ENCODE measurements at regions of chr5 and their contacts with region 1.

Region 1: DNA sequence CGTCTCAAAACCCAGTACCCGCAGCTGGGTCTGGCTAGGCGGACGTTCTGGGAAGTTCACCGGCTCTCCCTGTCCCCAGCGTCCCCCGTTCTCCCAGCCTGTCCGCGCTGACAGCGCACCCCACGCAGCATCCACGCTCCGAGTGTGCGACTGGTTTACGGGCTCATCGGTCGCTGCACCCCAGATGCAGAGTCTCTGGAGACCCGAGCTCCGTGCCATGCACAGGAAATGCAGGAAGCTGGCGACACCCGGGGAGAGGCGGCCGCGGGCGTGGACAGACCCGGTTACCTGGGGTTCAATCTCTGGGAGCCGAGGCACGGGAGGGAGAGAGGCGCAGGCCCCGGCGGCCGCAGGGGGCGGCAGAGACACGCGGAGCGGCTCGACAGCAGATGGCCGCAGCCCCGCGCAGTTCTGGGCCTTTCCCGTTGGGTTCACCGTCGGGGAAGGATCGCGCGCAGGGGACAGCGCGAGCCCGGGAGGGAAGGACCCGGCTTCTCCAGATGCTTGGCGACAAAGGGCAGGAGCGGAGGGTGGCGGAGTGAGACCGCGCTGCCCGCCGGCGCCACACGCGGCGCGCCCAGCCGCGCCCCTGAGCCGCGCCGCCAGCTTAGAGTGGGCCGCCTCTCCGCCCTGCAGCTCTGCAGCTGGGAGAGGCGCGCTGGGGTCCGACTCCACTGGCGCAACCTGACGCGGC is 558 bp downstream of the SHROOM1 start:
- DNase-seq: peak; percentile 54 to 77 (median 66)
- H3K4me3 ChIP-seq: peak overlapping the region; percentile 58
- H3K4me3 Mint-ChIP-seq: peak overlapping the region; percentile 87 to 96 (median 88)
- H3K27ac ChIP-seq: peak overlapping the region; percentile 51
- H3K27ac Mint-ChIP-seq: peak overlapping the region in 3 of 8 donors; percentile 8 to 68 (median 66)
- H3K4me1 ChIP-seq: peaks cover 5% of the 10 kb centered on the region
- H3K4me1 Mint-ChIP-seq: peaks cover 4 to 24% (median 6%) of the 10 kb centered on the region in 3 donors
- H3K27me3 ChIP-seq: peaks cover 21% of the 10 kb centered on the region
- H3K27me3 Mint-ChIP-seq: peaks cover 34 to 41% of the 10 kb centered on the region in 2 donors

Region 2: GRCh38 chr5:132526290-132526973 is 303.5 kb before region 1 on chr5:
- CTCF ChIA-PET with region 1: interaction called, 12 read pairs
- POLR2A ChIA-PET with region 1: no interaction called
- DNase-seq: peak in 4 of 5 donors; percentile 5 to 50 (median 44)
- H3K4me3 ChIP-seq: no peak overlapping the region
- H3K4me3 Mint-ChIP-seq: peak overlapping the region in 2 of 7 donors; percentile 25 to 71
- H3K27ac ChIP-seq: no peak overlapping the region
- H3K27ac Mint-ChIP-seq: no peak overlapping the region
- H3K4me1 ChIP-seq: peaks cover 6% of the 10 kb centered on the region
- H3K4me1 Mint-ChIP-seq: peaks cover 4 to 19% (median 10%) of the 10 kb centered on the region in 3 donors
- H3K27me3 ChIP-seq: no peaks in the 10 kb centered on the region
- H3K27me3 Mint-ChIP-seq: peaks cover 2 to 5% of the 10 kb centered on the region in 2 donors

Region 3: GRCh38 chr5:132736853-132737833 is 92.7 kb before region 1 on chr5 and contains the start of gene KIF3A:
- CTCF ChIA-PET with region 1: no interaction called
- POLR2A ChIA-PET with region 1: no interaction called
- DNase-seq: peak; percentile 96 to 99 (median 98)
- H3K4me3 ChIP-seq: peak within 1 kb of the TSS; percentile 81
- H3K4me3 Mint-ChIP-seq: peak within 1 kb of the TSS; percentile 87 to 97 (median 93)
- H3K27ac ChIP-seq: peak within 1 kb of the TSS; percentile 77
- H3K27ac Mint-ChIP-seq: peak within 1 kb of the TSS; percentile 84 to 97 (median 93)
- H3K4me1 ChIP-seq: peaks cover 21% of the 10 kb centered on the region
- H3K4me1 Mint-ChIP-seq: peaks cover 37 to 42% (median 41%) of the 10 kb centered on the region in 3 donors
- H3K27me3 ChIP-seq: no peaks in the 10 kb centered on the region
- H3K27me3 Mint-ChIP-seq: peaks cover 0 to 1% of the 10 kb centered on the region in 2 donors
- total RNA-seq, gene KIF3A: 21.1 to 23.3 TPM

Region 4: DNA sequence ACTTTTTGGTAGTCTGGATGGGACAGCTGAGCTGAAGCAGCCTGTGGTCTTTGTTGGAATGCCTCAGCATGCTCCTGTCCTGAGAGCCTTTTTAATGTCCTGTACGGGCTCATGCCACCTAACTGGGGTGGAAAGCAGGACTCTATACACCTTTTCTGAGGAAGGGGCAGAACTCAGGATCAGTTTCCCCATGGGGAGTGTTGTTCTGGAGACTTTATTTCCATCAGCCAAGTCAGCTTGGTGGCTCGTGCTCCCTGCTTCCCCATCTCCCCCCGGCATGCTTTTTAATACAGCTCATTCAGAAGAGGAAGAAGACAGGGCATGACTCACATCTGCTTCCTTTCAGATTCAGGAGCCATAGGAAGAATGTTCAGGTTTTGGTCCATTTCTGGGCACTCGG is 47.8 kb before region 1 on chr5:
- CTCF ChIA-PET with region 1: no interaction called
- POLR2A ChIA-PET with region 1: no interaction called
- DNase-seq: no peak
- H3K4me3 ChIP-seq: no peak overlapping the region
- H3K4me3 Mint-ChIP-seq: peak overlapping the region in 1 of 7 donors; percentile 53
- H3K27ac ChIP-seq: no peak overlapping the region
- H3K27ac Mint-ChIP-seq: no peak overlapping the region
- H3K4me1 ChIP-seq: peaks cover 10% of the 10 kb centered on the region
- H3K4me1 Mint-ChIP-seq: peaks cover 17 to 29% (median 23%) of the 10 kb centered on the region in 3 donors
- H3K27me3 ChIP-seq: no peaks in the 10 kb centered on the region
- H3K27me3 Mint-ChIP-seq: peaks cover 16% of the 10 kb centered on the region in 2 donors

Region 5: GRCh38 chr5:132802044-132802684 is 27.7 kb before region 1 on chr5:
- CTCF ChIA-PET with region 1: interaction called, 12 read pairs
- POLR2A ChIA-PET with region 1: no interaction called
- DNase-seq: no peak
- H3K4me3 ChIP-seq: no peak overlapping the region
- H3K4me3 Mint-ChIP-seq: no peak overlapping the region
- H3K27ac ChIP-seq: no peak overlapping the region
- H3K27ac Mint-ChIP-seq: no peak overlapping the region
- H3K4me1 ChIP-seq: no peaks in the 10 kb centered on the region
- H3K4me1 Mint-ChIP-seq: no peaks in the 10 kb centered on the region
- H3K27me3 ChIP-seq: no peaks in the 10 kb centered on the region
- H3K27me3 Mint-ChIP-seq: peaks cover 24 to 56% of the 10 kb centered on the region in 2 donors

Region 6: DNA sequence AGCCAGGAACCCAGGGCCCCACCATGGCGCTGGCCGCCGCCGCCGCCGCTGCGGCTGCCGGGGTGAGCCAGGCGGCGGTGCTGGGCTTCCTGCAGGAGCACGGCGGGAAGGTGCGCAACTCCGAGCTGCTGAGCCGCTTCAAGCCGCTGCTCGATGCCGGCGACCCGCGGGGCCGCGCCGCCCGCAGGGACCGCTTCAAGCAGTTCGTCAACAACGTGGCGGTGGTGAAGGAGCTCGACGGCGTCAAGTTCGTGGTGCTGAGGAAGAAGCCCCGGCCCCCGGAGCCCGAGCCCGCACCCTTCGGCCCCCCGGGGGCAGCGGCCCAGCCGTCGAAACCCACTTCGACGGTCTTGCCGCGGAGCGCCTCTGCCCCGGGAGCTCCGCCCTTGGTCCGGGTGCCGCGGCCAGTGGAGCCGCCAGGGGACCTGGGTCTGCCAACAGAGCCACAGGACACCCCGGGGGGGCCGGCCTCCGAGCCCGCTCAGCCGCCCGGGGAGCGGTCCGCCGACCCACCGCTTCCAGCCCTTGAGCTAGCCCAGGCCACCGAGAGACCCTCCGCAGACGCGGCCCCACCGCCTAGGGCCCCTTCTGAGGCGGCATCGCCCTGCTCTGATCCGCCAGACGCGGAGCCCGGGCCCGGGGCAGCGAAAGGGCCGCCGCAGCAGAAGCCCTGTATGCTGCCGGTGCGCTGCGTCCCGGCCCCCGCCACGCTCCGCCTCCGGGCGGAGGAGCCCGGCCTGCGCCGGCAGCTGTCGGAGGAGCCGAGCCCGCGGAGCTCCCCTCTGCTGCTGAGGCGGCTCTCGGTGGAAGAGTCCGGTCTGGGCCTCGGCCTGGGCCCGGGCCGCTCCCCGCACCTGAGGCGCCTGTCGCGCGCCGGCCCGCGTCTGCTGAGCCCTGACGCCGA is 16.0 kb before region 1 on chr5:
- CTCF ChIA-PET with region 1: interaction called, 47 read pairs
- POLR2A ChIA-PET with region 1: no interaction called
- DNase-seq: peak in 4 of 5 donors; percentile 21 to 58 (median 38)
- H3K4me3 ChIP-seq: no peak overlapping the region
- H3K4me3 Mint-ChIP-seq: peak overlapping the region in 2 of 7 donors; percentile 34 to 76
- H3K27ac ChIP-seq: no peak overlapping the region
- H3K27ac Mint-ChIP-seq: no peak overlapping the region
- H3K4me1 ChIP-seq: peaks cover 7% of the 10 kb centered on the region
- H3K4me1 Mint-ChIP-seq: peaks cover 7 to 14% (median 11%) of the 10 kb centered on the region in 3 donors
- H3K27me3 ChIP-seq: peaks cover 22% of the 10 kb centered on the region
- H3K27me3 Mint-ChIP-seq: peaks cover 42 to 46% of the 10 kb centered on the region in 2 donors

Region 7: GRCh38 chr5:132883261-132883834 is 53.5 kb after region 1 on chr5:
- CTCF ChIA-PET with region 1: interaction called, 11 read pairs
- POLR2A ChIA-PET with region 1: interaction called, 4 read pairs
- DNase-seq: peak in 2 of 5 donors; percentile 22 to 27
- H3K4me3 ChIP-seq: no peak overlapping the region
- H3K4me3 Mint-ChIP-seq: no peak overlapping the region
- H3K27ac ChIP-seq: no peak overlapping the region
- H3K27ac Mint-ChIP-seq: peak overlapping the region; percentile 8 to 81 (median 35)
- H3K4me1 ChIP-seq: no peaks in the 10 kb centered on the region
- H3K4me1 Mint-ChIP-seq: peaks cover 0 to 4% (median 2%) of the 10 kb centered on the region in 3 donors
- H3K27me3 ChIP-seq: no peaks in the 10 kb centered on the region
- H3K27me3 Mint-ChIP-seq: no peaks in the 10 kb centered on the region

Measured in CD8-positive, alpha-beta memory T cell (primary cell).